K562 (cell line): ENCODE measurements at regions of chr17 and their contacts with region 1.

Region 1: DNA sequence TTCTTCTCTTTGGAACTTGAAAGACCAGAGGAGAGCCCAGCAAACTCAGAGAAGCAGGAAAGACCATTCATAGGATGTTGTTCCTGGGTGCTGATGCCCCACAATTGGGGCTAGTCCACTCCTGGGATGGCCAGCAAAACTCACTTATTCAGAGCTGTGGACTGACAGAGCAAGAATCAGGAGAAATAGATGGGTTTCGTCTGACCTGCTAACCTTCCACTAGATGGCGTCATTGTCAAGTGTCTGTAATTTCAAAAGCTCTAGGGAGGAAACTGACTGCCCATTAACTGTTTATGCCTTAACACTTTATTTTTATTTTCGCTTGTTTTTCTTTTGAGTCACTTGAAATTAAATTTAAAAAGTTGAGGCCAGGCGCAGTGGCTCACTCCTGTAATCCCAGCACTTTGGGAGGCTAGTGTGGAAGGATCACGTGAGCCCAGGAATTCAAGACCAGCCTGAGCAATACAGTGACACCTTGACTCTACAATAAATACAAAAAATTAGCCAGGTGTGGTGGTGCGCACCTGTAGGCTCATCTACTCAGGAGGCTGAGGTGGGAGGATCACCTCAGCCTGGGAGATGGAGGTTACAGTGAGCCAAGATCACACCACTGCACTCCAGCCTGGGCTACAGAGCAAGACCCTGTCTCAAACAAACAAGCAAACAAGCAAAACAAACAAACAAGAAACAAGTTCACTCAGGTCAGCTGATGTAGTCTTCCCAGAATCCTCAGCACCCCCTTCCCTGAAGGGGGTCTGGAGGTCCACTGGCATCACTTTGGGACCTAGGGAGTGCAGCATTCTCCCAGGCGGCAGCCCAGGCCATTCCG is 28.6 kb upstream of the MILR1 start:
- DNase-seq: peak; percentile 59 to 83 (median 66)
- ATAC-seq: peak; percentile 92
- H3K4me3 ChIP-seq: no peak overlapping the region
- H3K27ac ChIP-seq: no peak overlapping the region
- H3K4me1 ChIP-seq: peaks cover 0 to 9% of the 10 kb centered on the region in 2 experiments; a peak in 1 of 5 replicates
- H3K27me3 ChIP-seq: no peaks in the 10 kb centered on the region
- CTCF ChIP-seq: peak; percentile 75 to 90 (median 79)
- EP300 ChIP-seq: no peak
- POLR2A ChIP-seq: no peak
- RAD21 ChIP-seq: peak; percentile 94 to 95

Region 2: DNA sequence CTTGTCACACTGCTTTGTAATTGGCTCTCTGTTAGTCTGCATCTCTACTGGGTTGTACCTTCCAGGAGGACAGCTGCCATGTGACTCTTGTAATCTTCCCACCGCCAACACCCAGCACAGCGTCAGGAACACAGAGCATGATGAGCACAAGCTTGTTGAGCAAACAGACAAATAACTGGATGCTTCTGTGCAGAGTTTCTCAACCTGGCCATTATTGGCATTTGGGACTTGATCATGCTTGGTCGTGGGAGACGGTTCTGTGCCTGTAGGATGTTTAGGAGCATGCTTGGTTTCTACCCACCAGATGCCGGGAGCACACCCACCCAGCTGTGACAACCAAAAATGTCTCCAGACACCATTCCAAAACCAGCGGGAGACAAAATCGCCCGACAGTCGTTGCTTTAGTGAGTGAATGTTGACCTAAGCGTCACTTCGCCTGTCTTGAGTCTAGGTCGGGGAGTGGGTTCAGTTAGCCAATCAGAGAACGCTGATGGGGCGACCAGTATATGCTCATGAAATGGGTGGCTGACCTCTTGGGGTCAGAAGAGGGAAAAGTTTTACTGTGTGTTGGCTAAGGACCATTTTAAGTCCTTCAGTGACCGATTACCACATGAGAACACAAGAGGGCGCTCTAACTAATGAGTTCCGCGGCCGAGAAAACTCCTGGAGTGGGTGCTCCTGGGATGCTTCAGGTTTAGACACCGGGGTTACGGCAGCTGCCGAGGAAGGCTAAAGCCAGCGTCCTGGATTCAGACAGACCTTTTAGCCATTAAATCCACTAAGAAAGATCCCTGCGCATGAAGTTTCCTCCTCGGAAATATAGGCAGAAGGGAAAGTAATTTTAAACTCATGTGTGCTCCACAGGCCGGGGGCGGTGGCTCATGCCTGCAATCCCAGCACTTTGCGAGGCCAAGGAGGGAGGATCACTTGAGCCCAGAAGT is 99.5 kb before region 1 on chr17:
- CTCF ChIA-PET with region 1: interaction called, 29 read pairs
- POLR2A ChIA-PET with region 1: interaction called, 3 read pairs
- in situ Hi-C with region 1: loop called (anchors 5 kb)
- intact Hi-C with region 1: loop called (anchors 1 kb)
- DNase-seq: peak; percentile 80 to 84 (median 84)
- ATAC-seq: peak; percentile 88
- H3K4me3 ChIP-seq: no peak overlapping the region
- H3K27ac ChIP-seq: no peak overlapping the region
- H3K4me1 ChIP-seq: peaks cover 0 to 7% of the 10 kb centered on the region in 2 experiments; a peak in 1 of 5 replicates
- H3K27me3 ChIP-seq: no peaks in the 10 kb centered on the region; a peak in 1 of 5 replicates
- CTCF ChIP-seq: peak; percentile 78 to 94 (median 83)
- EP300 ChIP-seq: peak; percentile 26; the same call in 1 of the 2 replicates
- POLR2A ChIP-seq: no peak
- RAD21 ChIP-seq: peak; percentile 91 to 96

Region 3: GRCh38 chr17:64506576-64507477 is 86.5 kb after region 1 on chr17 and contains the start of gene CEP95:
- CTCF ChIA-PET with region 1: interaction called, 3 read pairs
- POLR2A ChIA-PET with region 1: interaction called, 59 read pairs
- in situ Hi-C with region 1: no loop called
- intact Hi-C with region 1: no loop called
- DNase-seq: peak in 3 of 4 experiments; percentile 80 to 95 (median 88)
- ATAC-seq: peak; percentile 76
- H3K4me3 ChIP-seq: peak within 1 kb of the TSS; percentile 77
- H3K27ac ChIP-seq: peak within 1 kb of the TSS; percentile 97
- H3K4me1 ChIP-seq: peaks cover 6 to 13% of the 10 kb centered on the region in 2 experiments; a peak in 3 of 5 replicates
- H3K27me3 ChIP-seq: no peaks in the 10 kb centered on the region
- CTCF ChIP-seq: no peak
- EP300 ChIP-seq: peak; percentile 15; the same call in 1 of the 2 replicates
- POLR2A ChIP-seq: peak; percentile 72
- RAD21 ChIP-seq: no peak
- polyA plus RNA-seq, gene CEP95: 26.7 to 40.0 TPM

Region 4: GRCh38 chr17:64648234-64648633 is 227.9 kb after region 1 on chr17:
- CTCF ChIA-PET with region 1: interaction called, 14 read pairs
- POLR2A ChIA-PET with region 1: no interaction called
- in situ Hi-C with region 1: loop called (anchors 5 kb)
- intact Hi-C with region 1: loop called (anchors 1 kb)
- DNase-seq: no peak
- ATAC-seq: no peak
- H3K4me3 ChIP-seq: no peak overlapping the region
- H3K27ac ChIP-seq: no peak overlapping the region
- H3K4me1 ChIP-seq: peaks cover 0 to 5% of the 10 kb centered on the region in 2 experiments; a peak in 2 of 5 replicates
- H3K27me3 ChIP-seq: no peaks in the 10 kb centered on the region
- CTCF ChIP-seq: no peak
- EP300 ChIP-seq: no peak
- POLR2A ChIP-seq: no peak
- RAD21 ChIP-seq: no peak

Region 5: GRCh38 chr17:64773836-64774761 is 353.7 kb after region 1 on chr17:
- CTCF ChIA-PET with region 1: interaction called, 5 read pairs
- POLR2A ChIA-PET with region 1: no interaction called
- in situ Hi-C with region 1: no loop called
- intact Hi-C with region 1: loop called (anchors 5 kb)
- DNase-seq: peak; percentile 71 to 81 (median 76)
- ATAC-seq: peak; percentile 96
- H3K4me3 ChIP-seq: peak overlapping the region; percentile 39
- H3K27ac ChIP-seq: no peak overlapping the region
- H3K4me1 ChIP-seq: peaks cover 0 to 22% of the 10 kb centered on the region in 2 experiments; a peak in 2 of 5 replicates
- H3K27me3 ChIP-seq: no peaks in the 10 kb centered on the region
- CTCF ChIP-seq: peak; percentile 67 to 84 (median 74)
- EP300 ChIP-seq: no peak
- POLR2A ChIP-seq: 0 out of 2 replicates have a peak, but pooled peaks have one; percentile 42
- RAD21 ChIP-seq: peak; percentile 26 to 61; a peak in 2 of 4 replicates

Region 6: DNA sequence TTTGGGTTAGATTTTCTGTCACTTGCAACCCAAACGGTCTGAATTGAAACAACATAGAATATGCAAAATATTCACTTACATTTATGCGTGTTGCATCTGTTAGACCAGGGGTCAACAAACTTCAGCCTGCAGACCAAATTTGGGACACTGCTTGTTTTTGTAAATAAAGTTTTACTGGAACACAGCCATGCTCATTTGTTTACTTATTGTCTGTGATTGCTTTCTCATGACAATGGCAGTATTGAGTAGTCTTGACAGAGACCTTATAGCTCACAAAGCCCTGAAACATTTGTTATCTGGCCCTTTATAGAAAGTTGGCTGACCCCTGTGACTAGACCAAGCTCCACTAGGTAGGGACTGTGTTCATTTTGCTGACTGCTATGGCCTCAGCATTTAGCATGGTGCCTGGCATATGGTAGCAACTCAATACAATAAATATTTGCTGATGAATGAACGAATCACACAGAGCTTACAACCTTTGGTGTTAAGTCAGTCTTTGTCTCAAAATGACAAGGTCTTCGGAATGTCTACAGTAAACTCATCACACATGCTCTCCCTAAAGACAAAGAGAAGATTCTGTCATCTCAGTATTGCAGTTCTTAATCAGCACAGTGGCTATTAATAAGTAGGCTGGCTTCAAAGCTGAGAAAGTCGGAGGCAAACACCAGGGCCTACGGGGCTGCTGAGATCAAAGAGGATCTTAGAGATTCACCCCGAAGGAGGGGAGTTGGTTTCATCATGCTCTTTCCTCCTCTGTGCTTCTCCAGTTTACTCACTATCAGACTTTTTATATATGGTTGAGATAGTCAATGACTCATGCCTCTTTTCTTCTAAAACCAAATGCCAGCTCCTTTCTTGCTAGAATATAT is 1236.3 kb after region 1 on chr17:
- CTCF ChIA-PET with region 1: no interaction called
- POLR2A ChIA-PET with region 1: no interaction called
- in situ Hi-C with region 1: no loop called
- intact Hi-C with region 1: no loop called
- DNase-seq: no peak
- ATAC-seq: no peak
- H3K4me3 ChIP-seq: no peak overlapping the region
- H3K27ac ChIP-seq: no peak overlapping the region
- H3K4me1 ChIP-seq: peaks cover 0 to 7% of the 10 kb centered on the region in 2 experiments; a peak in 2 of 5 replicates
- H3K27me3 ChIP-seq: peaks cover 0 to 7% of the 10 kb centered on the region in 2 experiments; a peak in 2 of 5 replicates
- CTCF ChIP-seq: no peak
- EP300 ChIP-seq: no peak
- POLR2A ChIP-seq: no peak
- RAD21 ChIP-seq: no peak